ENCODE measurements at regions of chr1 and their contacts with region 1.

Region 1: DNA sequence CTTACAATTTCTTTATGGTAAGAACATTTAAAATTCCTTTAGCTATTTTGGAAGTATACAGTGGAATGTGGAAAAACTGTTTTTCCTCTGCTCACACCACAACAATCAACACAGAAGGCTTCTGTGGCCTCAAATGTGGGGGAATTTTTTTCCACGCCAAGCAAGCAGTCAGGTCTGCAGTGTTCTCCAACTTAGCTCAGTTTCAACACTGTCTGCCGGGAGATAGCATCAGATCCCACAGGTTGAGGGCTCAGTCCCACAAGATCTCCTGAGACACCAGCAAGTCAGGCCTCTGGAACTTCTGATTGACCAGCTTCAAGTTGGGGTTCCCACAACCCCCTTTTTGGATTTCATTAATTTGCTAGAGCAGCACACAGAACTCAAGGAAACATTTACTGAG is 50.3 kb downstream of the PTBP2 start:
- DNase-seq: no peak
- ATAC-seq: no peak
- H3K4me3 ChIP-seq: no peak overlapping the region
- H3K27ac ChIP-seq: no peak overlapping the region
- H3K4me1 ChIP-seq: no peaks in the 10 kb centered on the region
- H3K27me3 ChIP-seq: no peaks in the 10 kb centered on the region

Region 2: GRCh38 chr1:96721416-96722160 is 50.3 kb before region 1 on chr1 and contains the start of gene PTBP2:
- intact Hi-C with region 1: loop called in 1 of 2 experiments (anchors 5 kb)
- DNase-seq: peak; percentile 87 to 94
- ATAC-seq: peak; percentile 97
- H3K4me3 ChIP-seq: peak within 1 kb of the TSS; percentile 92 to 95
- H3K27ac ChIP-seq: peak within 1 kb of the TSS; percentile 38 to 73
- H3K4me1 ChIP-seq: peaks cover 0 to 2% of the 10 kb centered on the region in 2 donors
- H3K27me3 ChIP-seq: no peaks in the 10 kb centered on the region
- total RNA-seq, gene PTBP2: 39.8 to 46.3 TPM

Region 3: DNA sequence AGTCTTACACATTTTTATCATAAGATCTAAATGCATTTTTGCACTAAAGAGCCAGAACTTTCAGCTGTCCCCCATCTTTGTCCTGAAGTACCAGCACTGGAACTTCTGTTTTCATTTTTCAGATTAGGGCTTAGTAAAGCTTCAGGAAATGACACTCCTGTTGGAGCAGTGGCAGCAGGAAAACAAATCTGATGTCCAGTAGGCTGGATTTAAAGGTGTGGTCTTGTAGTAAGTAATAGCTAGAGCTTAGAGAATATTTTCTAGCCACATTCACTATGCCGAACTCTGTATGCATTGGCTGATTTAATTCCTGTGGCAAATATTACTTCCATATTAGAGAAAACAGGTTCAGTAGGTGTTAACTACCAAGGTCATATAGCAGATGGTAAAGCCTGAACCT is 53.4 kb after region 1 on chr1:
- intact Hi-C with region 1: no loop called
- DNase-seq: no peak
- ATAC-seq: no peak
- H3K4me3 ChIP-seq: no peak overlapping the region
- H3K27ac ChIP-seq: no peak overlapping the region
- H3K4me1 ChIP-seq: peaks cover 0 to 3% of the 10 kb centered on the region in 2 donors
- H3K27me3 ChIP-seq: no peaks in the 10 kb centered on the region